HCT116 (cell line): ENCODE measurements at regions of chr7 and their contacts with region 1.

Region 1: DNA sequence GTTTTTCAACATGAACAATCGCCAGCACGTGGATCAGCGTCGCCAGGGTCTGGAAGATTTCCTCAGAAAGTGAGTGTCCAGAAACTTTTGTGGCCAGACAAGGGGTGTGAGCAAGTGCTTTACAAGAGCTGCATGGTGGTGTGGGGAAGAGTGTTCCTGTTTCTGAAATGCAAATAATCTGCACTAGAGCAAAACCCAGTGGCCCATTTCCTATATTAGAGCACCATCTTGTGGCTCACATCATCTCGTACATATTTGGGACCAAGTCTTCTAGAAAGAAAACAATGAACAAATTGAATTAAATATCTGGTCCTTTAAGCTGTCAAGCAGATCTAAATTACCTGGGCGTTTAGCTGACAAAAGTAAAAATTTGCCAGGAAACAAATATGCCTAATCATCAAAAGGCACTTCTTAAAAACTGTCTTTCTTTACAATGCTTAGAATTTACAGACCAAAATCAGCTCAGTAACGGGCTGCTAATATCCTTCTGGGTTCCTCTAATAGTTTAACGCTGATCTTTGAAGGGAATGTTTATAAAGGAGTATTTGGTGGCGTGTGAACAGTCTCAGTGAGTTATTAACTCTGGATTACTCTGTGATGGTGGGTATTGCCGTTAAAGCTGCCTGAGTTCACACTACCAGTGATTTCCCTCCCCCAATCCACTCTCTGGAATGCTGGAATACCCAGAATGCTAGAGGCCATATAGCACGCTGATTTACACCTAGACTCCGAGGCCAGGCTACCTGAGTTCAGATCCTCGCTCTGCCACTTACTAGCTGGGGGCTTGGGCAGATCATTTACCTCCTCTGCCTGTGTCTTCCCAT is 73.6 kb downstream of the SNX10 start:
- DNase-seq: peak; percentile 51
- ATAC-seq: peak; percentile 84
- H3K4me3 ChIP-seq: no peak overlapping the region
- H3K27ac ChIP-seq: no peak overlapping the region
- H3K4me1 ChIP-seq: no peaks in the 10 kb centered on the region
- H3K27me3 ChIP-seq: no peaks in the 10 kb centered on the region
- CTCF ChIP-seq: peak; percentile 50 to 93 (median 74)
- POLR2A ChIP-seq: no peak
- RAD21 ChIP-seq: peak; percentile 98

Region 2: DNA sequence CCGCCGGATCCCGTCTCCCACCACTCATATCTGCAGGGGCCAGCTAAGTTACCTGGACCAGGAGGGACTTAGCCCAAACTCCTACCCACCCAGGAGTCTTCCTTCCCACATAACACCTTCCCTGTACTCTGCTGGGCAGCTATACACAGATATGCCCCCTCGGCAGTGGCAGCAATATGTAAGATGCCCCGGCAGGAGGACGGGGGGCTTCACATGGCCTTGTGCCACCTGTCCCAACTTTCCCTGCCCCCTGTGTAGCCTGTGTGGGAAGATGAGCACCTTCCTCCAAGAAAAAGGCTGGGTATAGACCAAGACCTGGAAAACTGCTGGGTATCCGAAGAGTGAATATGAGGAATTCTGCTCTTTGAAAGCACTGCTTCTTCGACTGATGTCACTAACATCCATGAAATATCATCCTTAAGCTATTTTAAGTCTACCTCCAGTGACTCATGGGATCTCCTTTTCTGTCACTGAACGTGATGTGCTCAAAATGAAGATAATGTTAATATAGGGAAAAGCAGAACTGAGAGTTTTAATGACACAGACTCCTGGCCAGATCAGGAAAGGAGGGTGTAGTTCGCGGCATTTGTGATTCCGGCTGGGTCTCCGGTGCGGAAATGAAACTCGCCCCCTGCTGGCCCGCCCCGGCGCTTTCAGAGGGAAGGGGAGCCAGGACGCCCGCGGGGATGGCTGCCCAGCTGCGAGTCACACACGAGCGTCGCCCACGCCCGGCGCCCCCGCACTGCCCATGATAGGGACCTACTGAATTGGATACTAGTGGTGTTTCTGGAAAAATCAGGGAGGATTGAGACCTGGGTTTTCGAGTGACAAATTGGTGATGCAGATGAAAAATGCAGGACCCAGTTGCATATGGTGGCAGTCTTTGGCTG is 470.1 kb before region 1 on chr7:
- CTCF ChIA-PET with region 1: interaction called, 94 read pairs
- POLR2A ChIA-PET with region 1: interaction called, 4 read pairs
- RAD21 ChIA-PET with region 1: interaction called, 5 to 15 read pairs
- intact Hi-C with region 1: loop called (anchors 1 kb)
- DNase-seq: peak; percentile 18
- ATAC-seq: peak; percentile 74
- H3K4me3 ChIP-seq: peak overlapping the region; percentile 18 to 24
- H3K27ac ChIP-seq: peak overlapping the region; percentile 26; the same call in 1 of the 2 replicates
- H3K4me1 ChIP-seq: peaks cover 6 to 28% of the 10 kb centered on the region in 2 experiments; a peak in 3 of 4 replicates
- H3K27me3 ChIP-seq: no peaks in the 10 kb centered on the region
- CTCF ChIP-seq: peak; percentile 49 to 86 (median 78); a peak in 5 of 6 replicates
- POLR2A ChIP-seq: no peak
- RAD21 ChIP-seq: peak; percentile 40; the same call in 1 of the 2 replicates

Region 3: DNA sequence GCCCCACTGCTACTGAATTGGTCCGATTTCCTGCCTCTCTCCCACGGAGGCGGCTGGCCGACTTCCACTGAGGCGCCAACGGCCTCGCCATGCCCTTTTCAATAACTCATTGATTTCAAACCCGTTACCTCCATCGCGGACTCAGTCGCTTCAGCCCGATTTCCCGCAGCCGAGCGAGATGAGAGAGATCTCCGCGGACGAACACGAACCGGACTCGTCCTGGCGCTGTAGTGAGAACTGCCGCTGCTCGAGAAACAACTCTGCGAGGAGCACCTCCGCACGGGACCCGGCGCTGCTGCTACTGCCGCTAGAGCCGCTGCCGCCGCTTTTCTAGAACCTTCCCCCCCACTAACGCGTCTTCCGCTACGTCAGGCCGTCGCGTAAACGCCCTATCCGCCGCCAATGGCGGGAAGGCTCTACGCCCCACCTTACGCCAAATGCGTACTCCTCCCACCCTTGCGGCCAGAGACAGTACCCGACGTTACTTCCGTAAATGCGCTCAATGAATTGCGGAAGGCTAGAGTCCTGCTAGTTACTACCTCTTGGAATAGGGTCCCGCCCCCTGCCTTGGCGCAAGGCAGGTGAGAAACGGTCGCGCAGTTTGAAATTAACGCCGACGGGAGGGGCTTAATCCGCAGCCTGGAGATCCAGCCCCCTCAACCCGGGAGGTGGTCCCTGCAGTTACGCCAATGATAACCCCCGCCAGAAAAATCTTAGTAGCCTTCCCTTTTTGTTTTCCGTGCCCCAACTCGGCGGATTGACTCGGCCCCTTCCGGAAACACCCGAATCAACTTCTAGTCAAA is 164.6 kb before region 1 on chr7 and contains the start of gene HNRNPA2B1:
- CTCF ChIA-PET with region 1: interaction called, 4 read pairs
- POLR2A ChIA-PET with region 1: interaction called, 5 read pairs
- RAD21 ChIA-PET with region 1: no interaction called
- intact Hi-C with region 1: loop called (anchors 1 kb)
- DNase-seq: peak; percentile 95
- ATAC-seq: peak; percentile 78
- H3K4me3 ChIP-seq: peak within 1 kb of the TSS; percentile 68 to 93
- H3K27ac ChIP-seq: peak within 1 kb of the TSS; percentile 97
- H3K4me1 ChIP-seq: peaks cover 13 to 39% of the 10 kb centered on the region in 2 experiments
- H3K27me3 ChIP-seq: no peaks in the 10 kb centered on the region
- CTCF ChIP-seq: no peak
- POLR2A ChIP-seq: peak; percentile 99
- RAD21 ChIP-seq: no peak
- total RNA-seq, gene HNRNPA2B1: 870 TPM

Region 4: GRCh38 chr7:26346611-26347203 is 18.6 kb before region 1 on chr7:
- CTCF ChIA-PET with region 1: interaction called, 13 read pairs
- POLR2A ChIA-PET with region 1: no interaction called
- RAD21 ChIA-PET with region 1: no interaction called
- intact Hi-C with region 1: no loop called
- DNase-seq: peak; percentile 28
- ATAC-seq: peak; percentile 88
- H3K4me3 ChIP-seq: 0 out of 4 replicates have a peak overlapping the region, but pooled peaks of 1 of the 2 experiments have one; percentile 3
- H3K27ac ChIP-seq: peak overlapping the region; percentile 1; the same call in 1 of the 2 replicates
- H3K4me1 ChIP-seq: peaks cover 4 to 28% of the 10 kb centered on the region in 2 experiments
- H3K27me3 ChIP-seq: no peaks in the 10 kb centered on the region
- CTCF ChIP-seq: no peak
- POLR2A ChIP-seq: no peak
- RAD21 ChIP-seq: no peak

Region 5: GRCh38 chr7:26500749-26501352 is 135.6 kb after region 1 on chr7:
- CTCF ChIA-PET with region 1: interaction called, 22 read pairs
- POLR2A ChIA-PET with region 1: no interaction called
- RAD21 ChIA-PET with region 1: interaction called in 1 of 2 experiments, 6 read pairs
- intact Hi-C with region 1: no loop called
- DNase-seq: peak; percentile 15
- ATAC-seq: peak; percentile 78
- H3K4me3 ChIP-seq: no peak overlapping the region
- H3K27ac ChIP-seq: no peak overlapping the region
- H3K4me1 ChIP-seq: no peaks in the 10 kb centered on the region
- H3K27me3 ChIP-seq: no peaks in the 10 kb centered on the region
- CTCF ChIP-seq: peak; percentile 58 to 67 (median 67); a peak in 5 of 6 replicates
- POLR2A ChIP-seq: no peak
- RAD21 ChIP-seq: peak; percentile 67

Region 6: DNA sequence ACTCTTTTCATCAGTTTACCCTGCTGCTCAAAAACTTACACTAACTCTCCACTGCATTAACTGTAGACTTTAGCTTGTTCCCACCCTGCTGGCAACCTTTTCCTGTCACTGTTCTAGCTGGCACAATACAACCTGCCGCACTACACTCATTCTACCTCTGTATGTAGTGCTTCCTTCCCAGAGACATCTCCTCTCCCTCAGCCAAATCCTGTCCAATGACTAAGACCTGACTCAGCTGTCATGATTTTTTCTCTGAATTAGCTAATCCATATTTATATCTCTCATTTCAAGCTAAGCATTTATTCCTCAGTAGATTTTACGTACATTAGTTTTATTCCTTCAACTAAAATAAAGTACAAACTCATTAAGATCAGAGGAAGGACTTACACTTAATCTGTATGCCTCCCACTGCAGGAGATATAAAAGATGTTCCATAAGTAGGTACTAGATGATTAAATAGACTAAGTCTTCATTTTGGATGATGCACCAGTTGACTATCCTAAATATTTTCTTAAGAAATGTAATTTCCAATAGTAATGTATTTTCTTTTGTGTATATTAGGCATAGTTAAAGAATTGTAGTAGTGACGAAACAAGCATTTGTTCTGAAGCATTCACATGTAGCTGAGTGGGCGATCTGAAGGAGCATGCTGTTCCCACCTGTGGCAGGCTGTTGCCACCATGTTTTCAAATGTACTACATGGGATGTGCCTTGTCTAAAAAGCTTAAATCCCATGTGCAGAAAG is 310.0 kb after region 1 on chr7:
- CTCF ChIA-PET with region 1: interaction called, 232 read pairs
- POLR2A ChIA-PET with region 1: interaction called, 3 read pairs
- RAD21 ChIA-PET with region 1: no interaction called
- intact Hi-C with region 1: no loop called
- DNase-seq: no peak
- ATAC-seq: peak; percentile 67
- H3K4me3 ChIP-seq: no peak overlapping the region
- H3K27ac ChIP-seq: no peak overlapping the region
- H3K4me1 ChIP-seq: peaks cover 0 to 7% of the 10 kb centered on the region in 2 experiments; a peak in 1 of 4 replicates
- H3K27me3 ChIP-seq: no peaks in the 10 kb centered on the region
- CTCF ChIP-seq: no peak
- POLR2A ChIP-seq: no peak
- RAD21 ChIP-seq: no peak